HepG2 (cell line): ENCODE measurements at regions of chr2 and their contacts with region 1.

Region 1: GRCh38 chr2:238426568-238427434 is at the start of gene ASB1:
- DNase-seq: peak; percentile 73
- ATAC-seq: peak; percentile 83
- H3K4me3 ChIP-seq: peak within 1 kb of the TSS; percentile 84 to 94 (median 92)
- H3K27ac ChIP-seq: peak within 1 kb of the TSS; percentile 87
- H3K4me1 ChIP-seq: peaks cover 49% of the 10 kb centered on the region
- H3K27me3 ChIP-seq: no peaks in the 10 kb centered on the region; a peak in 1 of 5 replicates
- CTCF ChIP-seq: no peak; the same call in 1 of the 2 replicates
- EP300 ChIP-seq: no peak; a peak in 1 of 4 replicates
- POLR2A ChIP-seq: peak; percentile 64 to 90
- RAD21 ChIP-seq: peak; percentile 72; the same call in 1 of the 2 replicates
- total RNA-seq, gene ASB1: 47.5 and 48.6 TPM in 2 replicates

Region 2: DNA sequence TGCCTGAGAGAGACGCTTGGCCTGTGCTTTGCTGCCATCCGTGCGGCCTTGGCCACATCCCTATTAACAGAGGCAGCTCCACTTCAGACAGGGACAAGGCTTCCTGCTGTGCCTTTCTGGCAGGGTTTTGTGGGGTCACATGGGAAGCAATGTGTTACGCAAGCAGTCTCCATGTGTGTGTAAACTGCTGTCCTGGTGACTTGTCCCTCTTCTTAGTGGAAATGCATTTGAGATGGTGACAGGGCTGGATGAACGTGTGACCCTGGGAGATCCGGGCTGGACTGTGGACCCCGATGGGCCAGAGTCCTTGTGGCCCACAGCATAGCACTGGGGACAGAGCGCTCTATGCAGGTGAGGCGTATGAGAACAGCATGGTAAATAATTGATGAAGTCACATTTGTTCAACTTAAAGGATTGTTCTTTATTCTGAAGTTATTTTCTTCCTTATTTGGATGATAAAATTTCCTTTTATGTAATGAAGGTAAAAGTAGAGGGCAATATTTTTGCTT is 23.2 kb after region 1 on chr2:
- CTCF ChIA-PET with region 1: no interaction called
- POLR2A ChIA-PET with region 1: interaction called, 11 read pairs
- in situ Hi-C with region 1: no loop called
- intact Hi-C with region 1: no loop called
- DNase-seq: peak; percentile 98
- ATAC-seq: peak; percentile 98
- H3K4me3 ChIP-seq: no peak overlapping the region; a peak in 1 of 6 replicates
- H3K27ac ChIP-seq: peak overlapping the region; percentile 89
- H3K4me1 ChIP-seq: peaks cover 39% of the 10 kb centered on the region
- H3K27me3 ChIP-seq: no peaks in the 10 kb centered on the region
- CTCF ChIP-seq: peak; percentile 58
- EP300 ChIP-seq: peak; percentile 82 to 83; a peak in 2 of 4 replicates
- POLR2A ChIP-seq: peak in 1 of 2 experiments; percentile 52; a peak in 2 of 4 replicates
- RAD21 ChIP-seq: peak; percentile 56; the same call in 1 of the 2 replicates